Tibial artery (tissue), 4 donors: ENCODE measurements at regions of chr10 and their contacts with region 1.

Region 1: GRCh38 chr10:80382989-80383388 is 25.4 kb upstream of the PRXL2A start:
- DNase-seq: no peak
- H3K4me3 ChIP-seq: no peak overlapping the region
- H3K27ac ChIP-seq: no peak overlapping the region
- H3K4me1 ChIP-seq: peaks cover 0 to 22% (median 6%) of the 10 kb centered on the region in 4 donors
- H3K27me3 ChIP-seq: no peaks in the 10 kb centered on the region
- CTCF ChIP-seq: peak; percentile 34 to 38

Region 2: DNA sequence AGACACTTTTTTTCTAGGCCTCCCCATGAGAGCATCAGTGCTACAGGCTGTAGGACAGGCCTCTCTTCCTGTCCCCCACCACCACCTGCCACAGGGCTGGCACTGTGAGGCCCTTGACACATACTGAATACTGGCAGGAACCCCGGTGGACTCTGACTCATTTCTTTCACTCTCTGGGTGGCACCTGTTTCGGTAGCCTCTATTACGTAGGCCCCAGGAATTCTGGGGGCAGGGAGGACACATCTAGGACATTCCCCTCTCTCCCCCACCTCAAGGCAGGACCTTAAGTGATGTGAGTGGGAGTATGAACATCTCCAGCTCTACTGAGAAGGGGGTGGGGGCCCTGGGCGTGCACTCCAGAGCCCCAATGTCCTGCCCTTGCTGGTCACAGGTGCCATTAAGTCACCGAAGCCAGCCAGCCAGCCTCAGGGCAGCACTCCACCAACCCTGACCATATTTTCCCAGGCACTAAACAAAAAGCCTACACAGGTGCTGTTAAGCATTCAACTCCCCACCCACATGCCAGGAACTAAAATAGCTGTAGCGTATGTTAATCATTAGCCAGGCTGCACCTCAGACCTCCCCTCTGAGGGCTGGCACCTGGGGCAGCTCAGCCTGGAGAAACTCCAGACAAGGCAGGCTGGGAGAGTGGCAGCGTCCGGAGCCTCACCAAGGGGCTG is 186.6 kb before region 1 on chr10:
- intact Hi-C with region 1: no loop called
- DNase-seq: peak in 1 of 2 donors; percentile 80
- H3K4me3 ChIP-seq: peak overlapping the region in 1 of 2 donors; percentile 15
- H3K27ac ChIP-seq: peak overlapping the region; percentile 67 to 72
- H3K4me1 ChIP-seq: peaks cover 0 to 88% (median 77%) of the 10 kb centered on the region in 4 donors
- H3K27me3 ChIP-seq: no peaks in the 10 kb centered on the region
- CTCF ChIP-seq: no peak

Region 3: DNA sequence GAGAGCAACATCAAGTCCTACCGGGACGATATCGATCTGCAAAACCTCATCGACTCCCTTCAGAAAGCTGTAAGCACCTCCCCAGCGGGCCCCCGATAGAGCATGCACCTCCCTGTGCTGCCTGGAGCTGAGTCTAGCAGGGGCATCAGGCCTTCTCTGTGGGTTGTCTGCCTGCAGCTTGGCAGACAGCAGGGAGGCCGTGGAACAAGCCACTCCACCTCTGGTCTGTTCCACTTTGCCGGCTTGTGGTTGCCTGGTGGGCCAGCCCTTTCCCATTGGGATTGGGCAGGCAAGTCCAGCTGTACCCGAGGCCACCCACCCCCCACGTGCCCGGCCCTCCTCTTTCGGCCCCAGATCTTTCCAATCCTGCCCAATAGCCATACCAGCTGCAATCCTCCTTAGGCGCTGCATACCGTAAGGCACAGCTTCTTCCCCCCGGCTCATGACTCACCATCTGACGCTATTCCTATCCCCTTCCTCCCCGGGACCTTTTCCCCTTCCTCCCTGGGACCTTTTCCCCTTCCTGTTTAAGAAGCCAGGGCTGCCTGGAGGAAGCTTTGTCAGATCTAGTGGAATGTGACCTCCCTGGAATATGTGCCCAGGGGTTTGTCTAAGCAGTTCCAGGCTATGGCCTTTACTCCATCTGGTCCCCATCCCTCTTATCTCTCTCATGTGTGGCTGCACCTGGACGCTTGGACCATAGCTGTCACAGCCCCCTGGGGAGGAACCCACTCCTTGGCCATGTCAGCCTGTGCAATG is 126.6 kb after region 1 on chr10:
- intact Hi-C with region 1: loop called (anchors 5 kb)
- DNase-seq: peak in 1 of 2 donors; percentile 53
- H3K4me3 ChIP-seq: no peak overlapping the region
- H3K27ac ChIP-seq: no peak overlapping the region
- H3K4me1 ChIP-seq: peaks cover 0 to 15% (median 9%) of the 10 kb centered on the region in 4 donors
- H3K27me3 ChIP-seq: no peaks in the 10 kb centered on the region
- CTCF ChIP-seq: no peak

Region 4: GRCh38 chr10:80552151-80552646 is 169.2 kb after region 1 on chr10:
- intact Hi-C with region 1: no loop called
- DNase-seq: no peak
- H3K4me3 ChIP-seq: no peak overlapping the region
- H3K27ac ChIP-seq: no peak overlapping the region
- H3K4me1 ChIP-seq: no peaks in the 10 kb centered on the region
- H3K27me3 ChIP-seq: no peaks in the 10 kb centered on the region
- CTCF ChIP-seq: no peak